Right ventricle myocardium inferior (tissue), 1 donor: ENCODE measurements at regions of chr7 and their contacts with region 1.

Region 1: DNA sequence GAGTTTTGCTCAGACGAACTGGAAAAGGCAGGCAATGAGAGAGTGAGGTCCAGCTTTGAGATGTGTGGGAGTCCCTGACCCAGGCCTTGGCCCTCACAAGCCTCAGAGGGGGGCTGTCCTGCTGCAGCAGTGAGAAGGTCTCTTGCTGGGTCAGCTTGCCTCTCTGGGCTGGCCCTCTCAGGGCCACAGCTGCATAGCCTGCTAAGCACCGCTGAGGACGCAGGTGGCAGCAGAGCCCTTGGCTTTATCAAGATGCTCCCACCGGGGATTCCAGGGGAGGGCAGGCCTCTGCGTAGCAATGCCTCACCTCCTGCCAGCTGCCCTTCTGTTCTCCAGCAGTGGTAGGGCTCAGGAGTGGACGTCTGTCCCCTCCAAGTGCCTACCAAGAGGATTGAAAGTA is 128.7 kb downstream of the COBL start:
- DNase-seq: no peak
- ATAC-seq: peak; percentile 70

Region 2: DNA sequence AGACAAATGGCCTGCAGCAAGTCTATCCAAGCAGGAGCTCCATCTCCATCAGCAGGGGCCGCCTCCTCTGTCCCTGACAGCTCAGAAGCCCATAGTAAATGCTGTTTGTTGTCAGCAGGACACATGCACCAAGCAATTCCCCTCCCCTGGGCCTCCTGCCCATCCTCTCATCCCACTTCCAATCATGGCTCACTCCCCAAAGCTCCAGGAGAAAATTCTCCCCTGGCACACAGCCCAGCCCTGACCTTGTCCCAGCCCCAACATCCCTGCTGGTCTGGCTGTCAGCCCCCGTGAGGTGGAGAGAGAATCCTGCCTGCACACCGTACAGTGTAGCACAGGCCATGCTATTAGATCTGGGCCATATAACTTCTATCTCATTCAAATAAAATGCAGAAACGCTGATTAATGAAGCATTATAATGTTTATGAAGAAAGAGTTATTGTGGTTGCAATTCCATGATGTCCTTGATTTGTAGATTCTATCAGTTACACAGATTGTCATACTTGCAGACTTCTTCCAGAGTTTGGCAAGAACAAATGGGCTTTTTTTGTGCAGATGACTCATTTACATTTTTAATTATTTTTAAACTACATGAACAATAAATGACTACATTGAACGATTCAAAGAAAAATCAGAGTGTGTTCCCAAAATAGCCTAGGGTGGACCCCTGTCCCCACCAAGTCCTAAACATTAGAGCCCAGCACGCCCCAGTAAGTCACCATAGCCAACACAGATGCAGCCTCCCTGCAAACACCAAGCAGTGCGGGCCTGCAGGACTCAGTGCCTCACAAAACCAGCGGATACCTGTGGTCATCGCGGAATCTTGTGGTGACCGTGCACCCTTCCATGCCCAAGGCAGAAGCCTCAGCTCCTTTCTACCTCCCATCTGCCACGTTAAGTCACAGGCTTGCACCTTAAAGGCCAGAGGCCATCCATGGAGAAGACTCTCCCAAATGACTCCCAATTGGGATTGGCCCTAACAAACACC is 58.6 kb after region 1 on chr7:
- intact Hi-C with region 1: loop called (anchors 5 kb)
- DNase-seq: no peak
- ATAC-seq: peak; percentile 96

Region 3: DNA sequence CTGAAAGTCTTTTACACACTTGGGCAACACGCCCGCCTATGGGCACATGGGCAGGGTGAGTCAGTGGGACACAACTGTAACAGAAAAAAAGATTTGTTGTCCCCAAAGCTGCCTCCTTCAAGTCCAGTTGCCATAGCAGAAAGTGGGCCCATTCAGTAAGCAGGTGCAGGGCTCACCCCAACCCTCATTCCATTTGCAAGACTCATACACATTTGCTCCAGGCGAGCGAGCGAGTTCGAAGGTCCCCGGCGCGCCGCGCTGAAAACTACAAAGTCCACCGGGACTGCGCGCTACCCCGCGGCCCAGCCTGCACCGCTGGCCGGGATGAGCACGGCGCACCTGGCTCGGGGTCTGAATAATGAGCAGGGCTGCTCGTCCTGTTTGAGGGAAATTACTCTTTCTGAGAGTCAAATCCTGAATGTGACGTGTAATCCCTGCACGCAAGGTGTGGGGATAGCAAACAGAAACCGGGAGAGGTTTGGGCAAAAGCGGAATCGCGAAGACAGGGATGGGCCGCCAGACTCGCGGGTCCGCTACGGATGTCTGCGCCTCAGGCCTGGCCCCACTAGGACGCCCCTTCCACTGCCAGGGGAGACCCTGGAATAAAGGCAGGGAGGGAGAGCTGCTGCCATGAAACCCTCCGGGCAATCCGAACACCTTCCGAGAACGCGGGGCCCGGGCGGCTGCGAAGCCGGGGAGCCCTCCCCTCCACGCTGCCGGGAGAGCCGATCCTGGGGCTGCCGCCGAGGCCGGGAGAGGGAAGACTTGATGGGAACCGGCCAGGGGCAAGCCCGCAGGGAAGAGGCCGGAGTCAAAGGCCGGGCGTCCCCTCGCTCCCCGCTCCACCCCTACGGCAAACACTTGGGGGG is 127.7 kb after region 1 on chr7:
- intact Hi-C with region 1: loop called (anchors 5 kb)
- DNase-seq: no peak
- ATAC-seq: peak; percentile 61

Region 4: DNA sequence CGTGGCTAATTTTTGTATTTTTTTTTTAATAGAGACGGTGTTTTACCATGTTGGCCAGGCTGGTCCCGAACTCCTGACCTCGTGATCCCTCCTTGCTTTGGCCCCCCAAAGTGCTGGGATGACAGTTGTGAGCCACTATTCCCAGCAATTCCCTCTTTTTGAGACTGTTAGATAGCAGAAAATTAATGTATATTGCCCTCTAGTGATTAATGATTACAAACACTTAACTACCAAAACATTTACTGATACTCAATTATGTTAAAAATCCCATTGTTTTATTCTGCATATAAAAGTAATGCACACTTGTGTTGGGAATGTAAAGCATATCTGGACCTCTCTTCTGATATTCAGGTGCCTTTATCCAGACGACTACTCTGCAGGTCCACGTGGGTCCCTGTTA is 169.9 kb after region 1 on chr7:
- intact Hi-C with region 1: loop called (anchors 5 kb)
- DNase-seq: no peak
- ATAC-seq: no peak